Cardiac septum (tissue), 1 donor: ENCODE measurements at regions of chr11 and their contacts with region 1.

Region 1: GRCh38 chr11:113305440-113306336 is 8.7 kb upstream of the TTC12 start:
- DNase-seq: no peak

Region 2: GRCh38 chr11:113131036-113131775 is 174.5 kb before region 1 on chr11:
- intact Hi-C with region 1: no loop called
- DNase-seq: no peak

Region 3: DNA sequence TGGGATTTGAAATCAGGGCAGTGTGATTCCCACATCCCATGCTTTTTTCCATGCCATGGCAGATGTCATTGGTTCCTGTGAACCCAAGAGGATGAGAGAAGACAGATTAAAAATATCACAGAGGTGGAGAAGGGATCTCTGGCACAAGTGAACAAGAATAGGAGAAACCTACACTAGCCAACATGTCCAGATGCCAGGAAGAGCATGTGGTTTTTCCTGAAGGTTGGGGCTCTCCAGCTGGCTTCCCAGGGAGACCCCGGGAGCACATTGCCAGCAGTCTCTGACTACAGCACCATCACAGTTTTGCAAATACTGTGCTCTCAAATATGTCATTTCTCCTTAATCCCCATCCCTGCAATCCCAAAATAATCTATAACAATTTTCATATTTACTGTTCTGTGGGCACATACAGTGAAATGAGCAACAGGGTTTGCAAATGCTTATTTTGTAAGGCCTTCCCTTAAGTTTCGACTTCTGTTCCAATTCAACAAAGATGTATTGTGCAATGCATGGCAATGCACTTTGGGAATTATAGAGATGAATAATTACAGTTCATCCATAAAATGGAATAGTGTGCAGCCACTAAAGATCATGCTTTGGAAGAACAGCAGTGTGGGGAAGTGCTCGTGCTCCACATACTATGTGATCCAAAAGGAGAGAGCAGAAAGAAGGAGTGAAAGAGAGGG is 86.7 kb after region 1 on chr11:
- intact Hi-C with region 1: no loop called
- DNase-seq: no peak

Region 4: DNA sequence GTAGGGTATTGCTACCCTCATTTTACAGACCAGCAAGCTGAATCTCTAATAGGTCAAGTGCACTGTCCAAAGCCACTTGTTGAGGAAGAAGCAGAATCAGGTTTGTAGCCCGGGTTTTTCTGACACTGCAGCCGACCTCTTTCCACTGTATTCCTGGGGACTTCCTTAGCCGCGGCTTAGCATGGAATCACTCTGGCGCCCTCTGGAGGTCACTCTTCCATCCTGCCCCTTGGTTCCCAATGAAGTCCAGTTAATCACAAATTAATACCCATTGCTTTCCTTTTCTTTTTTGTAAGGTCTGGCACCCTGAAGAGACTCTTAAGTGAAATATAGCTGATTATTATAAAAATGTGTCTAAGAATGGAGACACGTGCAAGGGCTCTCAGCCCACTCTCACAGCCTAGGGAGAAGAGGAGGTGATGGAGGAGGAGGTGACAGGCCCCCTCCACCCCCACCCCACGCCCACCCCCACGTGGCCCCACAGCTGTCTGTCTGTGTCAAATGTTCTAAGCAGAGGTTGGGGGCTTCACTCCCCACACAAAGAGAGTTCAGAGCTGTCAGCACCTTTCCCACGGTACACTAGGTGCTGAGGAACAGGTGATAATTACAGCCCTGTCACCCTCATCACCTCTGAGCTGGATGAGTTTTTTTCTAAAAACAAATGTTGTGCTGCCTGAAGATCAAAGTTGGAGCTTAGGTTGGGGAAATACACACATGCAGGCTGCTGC is 227.2 kb after region 1 on chr11:
- intact Hi-C with region 1: loop called (anchors 2 kb)
- DNase-seq: no peak

Region 5: DNA sequence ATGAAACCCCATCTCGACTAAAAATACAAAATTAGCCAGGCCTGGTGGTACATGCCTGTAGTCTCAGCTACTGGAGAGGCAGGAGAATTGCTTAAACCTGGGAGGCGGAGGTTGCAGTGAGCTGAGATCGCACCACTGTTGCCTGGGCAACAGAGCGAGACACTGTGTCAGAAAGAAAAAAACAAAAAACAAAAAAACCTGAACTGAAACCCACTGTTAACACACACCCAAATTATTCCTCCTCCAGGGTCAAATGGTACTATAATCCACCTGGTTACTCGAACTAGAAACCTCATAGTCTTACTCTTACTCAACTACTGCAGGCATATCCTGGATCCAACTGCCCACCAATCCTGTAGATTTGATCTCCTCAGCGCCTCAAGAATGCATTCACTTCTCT is 534.2 kb after region 1 on chr11:
- intact Hi-C with region 1: no loop called
- DNase-seq: no peak